ENCODE measurements at regions of chr5 and their contacts with region 1.

Region 1: GRCh38 chr5:57383093-57383861 is 99.3 kb downstream of the ACTBL2 start:
- DNase-seq: peak; percentile 16
- H3K4me3 Mint-ChIP-seq: peak overlapping the region; percentile 8
- H3K27ac Mint-ChIP-seq: peak overlapping the region; percentile 61
- H3K4me1 Mint-ChIP-seq: peaks cover 12% of the 10 kb centered on the region
- H3K27me3 Mint-ChIP-seq: peaks cover 2% of the 10 kb centered on the region

Region 2: DNA sequence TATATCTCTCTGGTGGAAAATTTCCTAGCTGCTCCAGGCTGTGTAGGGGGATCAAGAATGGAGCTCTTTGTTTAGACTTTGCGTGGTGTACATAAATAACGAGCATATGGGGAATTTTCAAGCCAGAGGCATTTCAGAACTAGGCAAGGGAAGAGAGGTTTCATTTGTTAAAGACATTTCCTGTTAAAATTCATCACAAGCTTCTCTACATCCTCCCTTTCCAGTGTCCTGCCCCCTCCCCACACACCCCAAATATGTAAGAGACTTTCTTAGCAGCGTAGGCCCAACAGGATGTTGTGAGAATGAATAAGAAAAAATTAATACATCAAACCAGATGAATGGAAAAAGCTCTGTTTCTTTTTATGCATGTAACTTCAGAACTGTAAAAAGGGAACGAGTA is 59.1 kb before region 1 on chr5:
- intact Hi-C with region 1: loop called (anchors 5 kb)
- DNase-seq: no peak
- H3K4me3 Mint-ChIP-seq: no peak overlapping the region
- H3K27ac Mint-ChIP-seq: peak overlapping the region; percentile 32
- H3K4me1 Mint-ChIP-seq: peaks cover 21% of the 10 kb centered on the region
- H3K27me3 Mint-ChIP-seq: no peaks in the 10 kb centered on the region

Region 3: GRCh38 chr5:57499262-57500050 is 116.2 kb after region 1 on chr5:
- intact Hi-C with region 1: loop called (anchors 1 kb)
- DNase-seq: no peak
- H3K4me3 Mint-ChIP-seq: peak overlapping the region; percentile 61
- H3K27ac Mint-ChIP-seq: no peak overlapping the region
- H3K4me1 Mint-ChIP-seq: peaks cover 36% of the 10 kb centered on the region
- H3K27me3 Mint-ChIP-seq: peaks cover 2% of the 10 kb centered on the region

Measured in activated T-helper 1 cell treated with anti-CD3 and anti-CD28 coated beads, Interleukin-12 subunit alpha, Interleukin-12 subunit beta, Interleukin-2, Interleukin-4 antibody, amounts not matched to agents 30 ng/mL and 10 ng/mL and 1 ng/mL, durations not matched to agents 14 hours and 24 hours and 36 hours (primary cell).